ENCODE measurements at regions of chr19 and their contacts with region 1.

Region 1: GRCh38 chr19:19776041-19777008 is 43.4 kb upstream of the ZNF14 start:
- DNase-seq: peak; percentile 94 to 98
- H3K4me3 ChIP-seq: peak overlapping the region; percentile 79 to 94 (median 91)
- H3K27ac ChIP-seq: peak overlapping the region; percentile 53; the same call in 1 of the 2 replicates
- H3K4me1 ChIP-seq: peaks cover 0 to 7% (median 0%) of the 10 kb centered on the region in 4 experiments; a peak in 2 of 7 replicates
- H3K27me3 ChIP-seq: no peaks in the 10 kb centered on the region
- CTCF ChIP-seq: peak in 1 of 3 experiments; percentile 2; a peak in 1 of 4 replicates
- EP300 ChIP-seq: no peak
- POLR2A ChIP-seq: peak; percentile 13 to 64
- RAD21 ChIP-seq: no peak; a peak in 1 of 4 replicates

Region 2: GRCh38 chr19:19745496-19746285 is 30.6 kb before region 1 on chr19:
- CTCF ChIA-PET with region 1: no interaction called
- POLR2A ChIA-PET with region 1: no interaction called
- DNase-seq: no peak
- H3K4me3 ChIP-seq: no peak overlapping the region
- H3K27ac ChIP-seq: no peak overlapping the region
- H3K4me1 ChIP-seq: no peaks in the 10 kb centered on the region
- H3K27me3 ChIP-seq: 0 out of 7 replicates have a peak, but pooled peaks cover 0 to 2% (median 0%) of the 10 kb centered on the region in 4 experiments
- CTCF ChIP-seq: peak in 1 of 3 experiments; percentile 9; a peak in 1 of 4 replicates
- EP300 ChIP-seq: no peak
- POLR2A ChIP-seq: no peak
- RAD21 ChIP-seq: no peak

Region 3: GRCh38 chr19:19788015-19788414 is 11.7 kb after region 1 on chr19:
- CTCF ChIA-PET with region 1: interaction called, 5 read pairs
- POLR2A ChIA-PET with region 1: interaction called, 36 read pairs
- DNase-seq: no peak
- H3K4me3 ChIP-seq: no peak overlapping the region
- H3K27ac ChIP-seq: no peak overlapping the region
- H3K4me1 ChIP-seq: no peaks in the 10 kb centered on the region
- H3K27me3 ChIP-seq: no peaks in the 10 kb centered on the region
- CTCF ChIP-seq: no peak
- EP300 ChIP-seq: no peak
- POLR2A ChIP-seq: no peak
- RAD21 ChIP-seq: no peak

Region 4: GRCh38 chr19:19865739-19866481 is 89.6 kb after region 1 on chr19 and contains the start of gene ZNF253:
- CTCF ChIA-PET with region 1: no interaction called
- POLR2A ChIA-PET with region 1: interaction called, 12 read pairs
- DNase-seq: peak; percentile 91 to 97
- H3K4me3 ChIP-seq: peak within 1 kb of the TSS; percentile 84 to 99 (median 90)
- H3K27ac ChIP-seq: peak within 1 kb of the TSS; percentile 100
- H3K4me1 ChIP-seq: peaks cover 0 to 3% (median 1%) of the 10 kb centered on the region in 4 experiments; a peak in 2 of 7 replicates
- H3K27me3 ChIP-seq: no peaks in the 10 kb centered on the region
- CTCF ChIP-seq: no peak; a peak in 1 of 4 replicates
- EP300 ChIP-seq: no peak
- POLR2A ChIP-seq: peak; percentile 99 to 100
- RAD21 ChIP-seq: 0 out of 4 replicates have a peak, but pooled peaks of 1 of the 2 experiments have one; percentile 4
- total RNA-seq, gene ZNF253: 64.0 and 74.6 TPM in 2 replicates

Measured in H1 (cell line).